ENCODE measurements at regions of chr5 and their contacts with region 1.

Region 1: GRCh38 chr5:66144074-66144833 is at the start of gene SREK1:
- DNase-seq: peak; percentile 90
- H3K4me3 Mint-ChIP-seq: peak within 1 kb of the TSS; percentile 92
- H3K27ac Mint-ChIP-seq: peak within 1 kb of the TSS; percentile 98
- H3K4me1 Mint-ChIP-seq: peaks cover 53% of the 10 kb centered on the region
- H3K27me3 Mint-ChIP-seq: no peaks in the 10 kb centered on the region
- total RNA-seq, gene SREK1: 52.2 to 60.0 TPM

Region 2: GRCh38 chr5:65562731-65563701 is 581.2 kb before region 1 on chr5 and contains the starts of genes CENPK and PPWD1:
- CTCF ChIA-PET with region 1: no interaction called
- intact Hi-C with region 1: loop called (anchors 1 kb)
- DNase-seq: peak; percentile 98
- H3K4me3 Mint-ChIP-seq: peak within 1 kb of the TSS; percentile 98
- H3K27ac Mint-ChIP-seq: peak within 1 kb of the TSS; percentile 96
- H3K4me1 Mint-ChIP-seq: peaks cover 45% of the 10 kb centered on the region
- H3K27me3 Mint-ChIP-seq: no peaks in the 10 kb centered on the region
- total RNA-seq, gene CENPK: 80.9 to 83.1 TPM
- total RNA-seq, gene PPWD1: 33.6 to 33.9 TPM

Region 3: GRCh38 chr5:65721720-65722574 is 422.3 kb before region 1 on chr5 and contains the starts of genes NLN and SGTB:
- CTCF ChIA-PET with region 1: interaction called, 3 read pairs
- intact Hi-C with region 1: loop called (anchors 1 kb)
- DNase-seq: peak; percentile 80
- H3K4me3 Mint-ChIP-seq: peak within 1 kb of the TSS; percentile 88
- H3K27ac Mint-ChIP-seq: peak within 1 kb of the TSS; percentile 94
- H3K4me1 Mint-ChIP-seq: peaks cover 13% of the 10 kb centered on the region
- H3K27me3 Mint-ChIP-seq: no peaks in the 10 kb centered on the region
- total RNA-seq, gene NLN: 32.4 to 35.5 TPM
- total RNA-seq, gene SGTB: 16.1 to 17.3 TPM

Region 4: DNA sequence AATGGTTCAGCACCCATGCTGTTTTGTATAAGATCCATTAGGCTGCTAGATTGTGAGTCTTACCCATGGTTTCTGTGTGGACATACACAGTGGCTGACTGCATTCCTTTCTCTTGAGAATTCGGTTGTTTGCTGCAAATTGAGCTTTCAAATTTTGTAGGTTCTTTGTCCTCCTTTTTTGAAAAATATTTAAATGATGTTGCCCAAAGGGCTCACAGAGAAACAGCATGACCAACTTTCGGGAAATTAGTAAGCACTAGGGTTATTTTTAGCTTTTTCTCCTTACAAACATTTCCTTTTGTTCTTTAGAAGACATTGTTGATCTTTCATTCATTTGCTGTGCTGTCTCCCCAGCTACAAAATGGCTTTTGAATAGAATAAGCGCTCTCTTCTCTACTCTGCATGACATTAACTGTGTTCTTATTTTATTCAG is 342.9 kb before region 1 on chr5:
- CTCF ChIA-PET with region 1: no interaction called
- intact Hi-C with region 1: loop called (anchors 5 kb)
- DNase-seq: no peak
- H3K4me3 Mint-ChIP-seq: no peak overlapping the region
- H3K27ac Mint-ChIP-seq: no peak overlapping the region
- H3K4me1 Mint-ChIP-seq: peaks cover 33% of the 10 kb centered on the region
- H3K27me3 Mint-ChIP-seq: no peaks in the 10 kb centered on the region

Region 5: DNA sequence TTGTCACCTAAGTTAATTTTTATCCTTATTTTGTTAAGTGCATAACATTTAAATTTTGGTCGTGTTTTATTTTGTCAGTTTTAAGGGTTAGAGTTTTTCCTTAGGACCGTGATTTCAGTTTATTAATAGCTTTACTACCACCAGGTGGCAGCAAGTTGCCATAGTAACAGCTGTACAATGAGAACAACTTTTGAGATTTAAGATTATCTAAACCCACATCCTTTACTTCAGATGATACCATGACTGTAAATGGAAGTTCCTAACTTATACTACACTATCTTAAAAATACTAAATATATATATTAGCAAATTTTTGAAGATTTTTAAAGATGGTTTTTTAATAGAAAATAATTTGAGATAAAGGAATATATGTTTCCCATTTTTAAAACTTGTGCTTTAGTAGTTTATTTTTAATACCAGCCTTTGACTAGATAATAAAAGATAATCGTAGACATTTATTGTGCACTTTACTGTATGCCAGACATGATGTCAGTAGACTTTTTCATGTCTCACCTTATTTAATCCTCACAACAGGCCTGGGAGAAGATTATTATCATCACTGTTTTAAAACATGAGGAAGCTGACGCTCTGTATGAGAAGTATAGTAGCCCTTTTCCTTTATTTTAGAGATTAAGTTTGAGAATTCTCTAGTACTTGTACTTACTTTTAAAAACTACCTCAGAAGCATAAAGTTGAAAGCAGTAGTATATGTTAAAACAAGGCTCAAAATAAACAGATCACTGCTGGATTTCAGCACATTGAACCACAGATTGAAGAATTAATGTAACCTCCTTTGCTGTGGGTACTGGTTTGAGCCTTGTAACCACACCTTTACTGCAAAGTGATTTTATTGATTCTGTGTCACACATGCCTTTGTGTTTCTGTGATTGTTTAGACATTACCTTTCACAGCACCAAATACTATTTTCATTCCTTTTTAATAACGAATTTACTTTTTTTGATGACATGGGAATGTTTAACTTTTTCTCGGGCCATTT is 27.4 kb after region 1 on chr5:
- CTCF ChIA-PET with region 1: no interaction called
- intact Hi-C with region 1: loop called (anchors 1 kb)
- DNase-seq: peak; percentile 71
- H3K4me3 Mint-ChIP-seq: no peak overlapping the region
- H3K27ac Mint-ChIP-seq: no peak overlapping the region
- H3K4me1 Mint-ChIP-seq: peaks cover 30% of the 10 kb centered on the region
- H3K27me3 Mint-ChIP-seq: no peaks in the 10 kb centered on the region

Measured in activated naive CD4-positive, alpha-beta T cell treated with anti-CD3 and anti-CD28 coated beads for 36 hours (primary cell).